ENCODE measurements at regions of chr12 and their contacts with region 1.

Region 1: GRCh38 chr12:14905269-14906004 is 19.8 kb upstream of the MGP start:
- DNase-seq: peak in 2 of 3 donors; percentile 69 to 87
- ATAC-seq: peak; percentile 78
- H3K4me3 ChIP-seq: no peak overlapping the region
- H3K27ac ChIP-seq: peak overlapping the region; percentile 75
- H3K4me1 ChIP-seq: peaks cover 14% of the 10 kb centered on the region
- H3K27me3 ChIP-seq: no peaks in the 10 kb centered on the region

Region 2: DNA sequence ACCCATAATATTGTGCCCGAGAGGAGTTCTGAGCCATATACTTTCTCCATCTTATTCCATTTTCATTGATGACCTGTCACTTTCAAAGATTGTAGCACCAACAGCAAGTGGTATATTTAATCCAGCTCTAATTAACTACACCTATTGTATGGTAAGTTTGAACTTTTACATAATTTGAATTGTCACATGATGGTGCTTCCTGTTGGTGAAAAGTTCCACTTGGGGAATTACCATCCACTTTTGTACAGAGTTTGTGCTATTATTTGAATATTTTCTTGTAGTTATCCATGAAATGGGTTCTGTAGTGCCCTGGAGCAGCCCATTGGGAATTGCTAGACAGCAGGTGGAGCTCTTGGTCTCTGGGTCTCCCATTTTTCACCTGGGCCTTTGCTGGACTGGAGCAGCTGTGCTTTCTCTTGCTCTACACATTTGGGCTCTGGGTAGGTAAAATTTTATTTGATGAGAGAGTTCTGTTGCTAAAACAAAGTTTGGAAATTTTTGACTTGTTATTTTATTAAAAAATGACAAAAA is 94.4 kb before region 1 on chr12:
- intact Hi-C with region 1: no loop called
- DNase-seq: peak in 1 of 3 donors; percentile 27
- ATAC-seq: no peak
- H3K4me3 ChIP-seq: no peak overlapping the region
- H3K27ac ChIP-seq: no peak overlapping the region
- H3K4me1 ChIP-seq: no peaks in the 10 kb centered on the region
- H3K27me3 ChIP-seq: no peaks in the 10 kb centered on the region

Region 3: GRCh38 chr12:14956024-14956891 is 50.8 kb after region 1 on chr12:
- intact Hi-C with region 1: loop called in 1 of 4 experiments (anchors 2 kb)
- DNase-seq: no peak
- ATAC-seq: no peak
- H3K4me3 ChIP-seq: no peak overlapping the region
- H3K27ac ChIP-seq: peak overlapping the region; percentile 13
- H3K4me1 ChIP-seq: peaks cover 9% of the 10 kb centered on the region
- H3K27me3 ChIP-seq: no peaks in the 10 kb centered on the region